A673 (cell line): ENCODE measurements at regions of chr2 and their contacts with region 1.

Region 1: DNA sequence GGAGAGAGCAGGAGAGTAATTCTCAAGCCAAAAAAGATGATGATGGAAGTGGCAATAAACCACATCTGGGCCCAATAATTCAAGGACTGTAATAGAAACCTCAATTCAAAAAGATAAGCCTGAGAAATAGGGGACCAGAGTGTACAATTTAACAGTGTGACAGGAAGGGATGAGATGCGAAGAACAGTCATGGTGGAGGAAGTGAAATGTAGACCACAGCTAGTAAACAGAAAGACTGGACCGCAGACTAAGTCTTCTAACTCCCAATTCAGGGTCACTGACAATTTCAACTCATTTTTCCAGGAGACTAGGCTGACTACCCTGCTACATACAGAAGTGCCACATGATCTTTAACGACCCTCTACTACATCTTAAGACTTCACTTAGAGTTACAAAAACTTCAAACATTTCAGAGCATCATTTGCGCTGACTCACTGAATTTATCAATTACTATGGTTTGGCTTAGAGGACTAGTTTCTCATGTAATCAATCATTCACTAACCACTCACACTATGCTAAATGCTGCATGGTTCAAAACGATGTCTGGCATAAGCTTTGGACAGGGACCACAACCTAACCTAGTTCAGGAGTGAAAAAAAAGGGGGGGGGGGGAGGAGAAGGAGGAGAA is 9.0 kb downstream of the CUL3 start:
- DNase-seq: no peak
- H3K4me3 ChIP-seq: no peak overlapping the region
- H3K27ac ChIP-seq: no peak overlapping the region
- H3K4me1 ChIP-seq: peaks cover 66% of the 10 kb centered on the region
- H3K27me3 ChIP-seq: no peaks in the 10 kb centered on the region
- CTCF ChIP-seq: no peak

Region 2: DNA sequence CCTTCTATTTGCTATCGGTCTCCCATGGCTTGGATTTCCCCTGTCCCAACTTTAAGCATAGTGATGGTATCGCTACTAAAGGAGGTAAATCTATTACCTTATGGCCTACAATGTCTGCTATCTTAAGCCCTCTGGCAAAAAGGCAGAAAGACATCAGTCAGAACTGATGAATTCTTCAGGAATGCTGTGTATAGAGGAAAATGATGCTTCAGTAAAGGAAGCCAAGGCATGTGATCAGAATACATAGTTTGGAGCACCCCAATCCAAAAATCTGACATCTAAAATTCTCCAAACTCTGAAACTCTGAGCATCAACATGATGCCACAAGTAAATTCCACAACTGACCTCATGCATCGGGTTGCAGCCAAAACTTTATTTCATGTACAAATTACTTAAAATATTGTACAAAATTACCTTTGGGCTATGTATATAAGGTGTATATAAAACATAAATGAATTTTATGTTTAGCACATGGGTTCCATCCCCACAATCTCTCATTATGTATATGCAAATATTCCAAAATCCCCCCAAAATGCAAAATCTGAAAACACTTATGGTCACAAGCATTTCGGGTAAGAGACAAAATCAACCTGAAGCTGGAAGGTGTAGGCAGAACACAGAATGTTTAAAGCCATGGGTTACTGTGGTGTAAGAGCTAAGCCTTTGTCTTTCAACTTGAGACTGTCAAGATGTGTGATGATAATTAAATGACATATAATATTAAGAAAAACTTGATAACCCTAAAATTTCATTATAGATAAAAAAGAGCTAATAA is 57.2 kb before region 1 on chr2:
- CTCF ChIA-PET with region 1: no interaction called
- POLR2A ChIA-PET with region 1: no interaction called
- intact Hi-C with region 1: loop called (anchors 5 kb)
- DNase-seq: no peak
- H3K4me3 ChIP-seq: no peak overlapping the region
- H3K27ac ChIP-seq: no peak overlapping the region
- H3K4me1 ChIP-seq: peaks cover 12% of the 10 kb centered on the region
- H3K27me3 ChIP-seq: no peaks in the 10 kb centered on the region
- CTCF ChIP-seq: no peak

Region 3: GRCh38 chr2:224591220-224591619 is 15.0 kb after region 1 on chr2:
- CTCF ChIA-PET with region 1: no interaction called
- POLR2A ChIA-PET with region 1: no interaction called
- intact Hi-C with region 1: no loop called
- DNase-seq: no peak
- H3K4me3 ChIP-seq: no peak overlapping the region
- H3K27ac ChIP-seq: no peak overlapping the region
- H3K4me1 ChIP-seq: peaks cover 6% of the 10 kb centered on the region
- H3K27me3 ChIP-seq: no peaks in the 10 kb centered on the region
- CTCF ChIP-seq: no peak